ENCODE measurements at regions of chr9 and their contacts with region 1.

Region 1: DNA sequence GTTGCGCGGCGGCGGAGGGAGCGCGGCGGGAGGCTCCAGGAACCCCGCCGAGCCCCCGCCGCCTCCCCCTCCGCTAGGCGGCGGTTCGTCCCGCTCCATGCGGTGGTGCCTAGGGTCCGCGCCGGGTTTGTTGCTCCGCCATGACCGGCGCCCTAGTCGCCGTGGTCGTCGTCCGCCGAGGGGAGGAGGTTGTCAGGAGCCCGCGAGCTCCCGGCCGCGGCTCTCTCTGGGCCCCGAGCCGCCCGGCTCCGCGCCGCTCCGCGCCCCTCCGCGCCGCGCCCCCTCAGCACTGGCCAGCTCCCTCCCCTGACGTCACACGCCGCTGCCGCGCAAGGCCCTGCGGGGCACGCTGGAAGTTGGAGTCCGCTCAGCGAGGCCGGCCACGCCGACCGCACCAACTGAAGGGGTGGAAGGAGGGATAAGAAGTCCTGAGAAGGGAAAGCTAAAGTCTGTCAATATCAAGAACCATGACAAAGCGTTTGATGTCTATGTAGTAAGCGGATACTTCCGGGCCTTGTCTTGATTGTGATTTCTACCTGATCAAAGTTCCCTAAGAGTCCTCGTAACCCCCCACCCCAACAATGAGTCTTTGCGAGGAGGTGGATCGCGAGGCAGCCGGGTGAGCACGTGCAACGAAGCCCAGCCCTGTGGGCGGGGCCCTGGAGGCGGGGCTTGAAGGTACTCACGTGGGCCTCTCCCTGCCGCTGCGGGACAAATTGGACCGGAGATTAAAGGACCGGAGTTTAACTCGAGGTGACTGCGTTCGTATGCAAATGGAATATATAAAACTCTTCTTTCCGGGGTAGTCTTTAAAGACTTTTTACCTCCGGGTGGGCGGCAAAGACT is at the start of gene NR6A1:
- DNase-seq: peak; percentile 95 to 96
- H3K4me3 ChIP-seq: peak within 1 kb of the TSS; percentile 80 to 91 (median 90)
- H3K27ac ChIP-seq: peak within 1 kb of the TSS; percentile 81 to 82
- H3K4me1 ChIP-seq: no peaks in the 10 kb centered on the region
- H3K27me3 ChIP-seq: peaks cover 0 to 1% of the 10 kb centered on the region in 2 donors
- CTCF ChIP-seq: no peak
- POLR2A ChIP-seq: no peak
- total RNA-seq, gene NR6A1: 1.3 to 5.3 (median 3.9) TPM

Region 2: GRCh38 chr9:124852829-124853531 is 81.7 kb after region 1 on chr9 and contains the start of gene WDR38:
- intact Hi-C with region 1: loop called (anchors 2 kb)
- DNase-seq: peak; percentile 65 to 69
- H3K4me3 ChIP-seq: peak within 1 kb of the TSS; percentile 42 to 66 (median 51)
- H3K27ac ChIP-seq: peak within 1 kb of the TSS; percentile 22 to 67
- H3K4me1 ChIP-seq: peaks cover 0 to 7% of the 10 kb centered on the region in 2 donors
- H3K27me3 ChIP-seq: no peaks in the 10 kb centered on the region
- CTCF ChIP-seq: peak; percentile 94 to 100 (median 97)
- POLR2A ChIP-seq: no peak
- total RNA-seq, gene WDR38: 0.33 TPM in 1 of 3 donors, not detected in the others

Region 3: DNA sequence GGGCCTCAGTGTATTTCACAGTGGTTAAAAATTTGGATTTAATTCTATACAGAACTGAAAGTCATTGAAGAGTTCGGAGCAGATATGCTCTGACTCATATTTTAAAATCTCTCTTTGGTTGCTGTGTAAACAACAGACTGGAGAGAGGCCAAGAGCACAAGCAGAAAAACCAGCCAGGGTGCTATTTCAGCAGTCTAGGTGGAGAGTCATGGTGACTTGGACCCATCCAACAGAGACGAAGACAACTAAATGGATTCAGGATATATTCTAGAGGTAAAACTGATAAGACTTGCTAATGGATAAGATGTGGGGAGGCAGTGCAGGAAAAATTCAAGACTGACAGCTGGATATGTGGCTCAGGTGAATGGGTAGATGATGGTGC is 766.8 kb after region 1 on chr9:
- intact Hi-C with region 1: loop called (anchors 10 kb)
- DNase-seq: peak in 1 of 2 donors; percentile 40
- H3K4me3 ChIP-seq: no peak overlapping the region
- H3K27ac ChIP-seq: peak overlapping the region; percentile 10 to 76
- H3K4me1 ChIP-seq: peaks cover 0 to 7% of the 10 kb centered on the region in 2 donors
- H3K27me3 ChIP-seq: no peaks in the 10 kb centered on the region
- CTCF ChIP-seq: no peak
- POLR2A ChIP-seq: no peak

Measured in breast epithelium (tissue), 4 donors.